IMR-90 (cell line): ENCODE measurements at regions of chr7 and their contacts with region 1.

Region 1: GRCh38 chr7:82234457-82235049 is 209.0 kb downstream of the CACNA2D1 start:
- DNase-seq: peak; percentile 59
- ATAC-seq: no peak; the same call in 1 of the 2 replicates
- H3K4me3 ChIP-seq: no peak overlapping the region
- H3K27ac ChIP-seq: no peak overlapping the region
- H3K4me1 ChIP-seq: 0 out of 2 replicates have a peak, but pooled peaks cover 1% of the 10 kb centered on the region
- H3K27me3 ChIP-seq: no peaks in the 10 kb centered on the region
- CTCF ChIP-seq: peak; percentile 75
- POLR2A ChIP-seq: no peak
- RAD21 ChIP-seq: peak; percentile 75

Region 2: DNA sequence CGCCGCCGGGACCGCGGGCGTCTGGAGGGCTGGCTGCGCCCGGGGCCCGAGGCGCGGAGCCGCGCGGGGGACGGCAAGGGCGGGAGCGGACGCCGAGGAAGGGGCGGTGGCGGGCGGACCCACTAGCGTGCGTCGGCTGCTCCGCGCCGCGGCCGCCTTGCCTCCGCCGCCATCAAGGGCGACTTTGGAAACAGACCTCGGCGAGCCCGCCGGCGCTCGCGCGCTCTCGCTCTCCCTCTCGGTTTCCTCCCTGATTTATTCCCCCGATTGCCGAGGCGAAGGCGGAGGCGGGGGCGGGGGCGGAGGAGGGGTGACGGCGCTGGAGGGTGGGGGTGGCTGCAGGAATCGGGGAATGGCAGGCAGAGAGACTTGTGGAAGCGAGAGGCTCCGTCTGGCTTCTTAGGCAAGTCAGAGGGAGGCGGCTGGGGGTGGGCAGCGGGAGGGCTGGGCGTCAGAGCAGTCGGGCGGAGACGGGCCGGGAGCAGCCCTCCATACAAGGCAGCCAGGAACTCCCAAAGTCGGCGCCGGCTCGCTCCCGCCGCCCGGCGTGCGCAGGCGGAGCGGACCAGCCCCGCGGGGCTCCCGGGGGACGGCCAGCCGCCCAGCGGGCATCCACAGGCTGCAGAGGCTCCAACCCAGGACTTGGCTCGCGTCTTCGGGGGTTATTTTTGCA is 209.1 kb after region 1 on chr7 and contains the start of gene CACNA2D1:
- CTCF ChIA-PET with region 1: no interaction called
- POLR2A ChIA-PET with region 1: no interaction called
- dilution Hi-C with region 1: no loop called
- in situ Hi-C with region 1: no loop called
- intact Hi-C with region 1: loop called (anchors 5 kb)
- DNase-seq: peak; percentile 91
- ATAC-seq: peak; percentile 91
- H3K4me3 ChIP-seq: peak within 1 kb of the TSS; percentile 96
- H3K27ac ChIP-seq: peak within 1 kb of the TSS; percentile 98
- H3K4me1 ChIP-seq: peaks cover 2% of the 10 kb centered on the region
- H3K27me3 ChIP-seq: no peaks in the 10 kb centered on the region
- CTCF ChIP-seq: peak; percentile 37
- POLR2A ChIP-seq: peak; percentile 53; the same call in 1 of the 2 replicates
- RAD21 ChIP-seq: peak; percentile 39; the same call in 1 of the 2 replicates
- total RNA-seq, gene CACNA2D1: 21.9 and 32.2 TPM in 2 replicates

Region 3: DNA sequence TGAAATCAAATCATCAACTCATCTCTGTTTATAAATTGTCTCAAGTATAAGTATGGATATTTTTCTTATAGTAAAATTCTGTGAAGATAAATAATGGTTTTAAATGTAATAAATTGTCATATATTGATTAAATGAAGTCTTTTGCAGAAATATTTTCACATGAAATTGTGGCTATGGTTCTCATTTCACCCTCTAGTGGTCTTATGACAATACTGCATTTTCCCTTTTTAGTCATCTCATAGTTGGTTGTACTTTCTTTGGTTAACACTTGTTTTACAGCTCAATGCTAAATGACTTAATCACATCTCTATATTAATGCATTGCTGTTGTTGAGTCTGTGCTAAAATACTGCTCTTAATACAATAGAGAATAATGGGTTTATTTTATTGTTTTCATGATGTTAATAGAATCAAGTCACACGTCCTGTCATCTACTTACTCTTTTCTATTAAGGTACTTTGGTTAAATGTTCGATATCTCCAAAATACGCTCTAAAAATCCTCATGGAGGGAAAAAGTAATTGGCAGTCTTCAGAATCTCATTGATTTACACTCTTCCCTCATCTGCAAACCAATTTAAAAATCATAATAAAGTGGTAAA is 247.0 kb after region 1 on chr7:
- CTCF ChIA-PET with region 1: no interaction called
- POLR2A ChIA-PET with region 1: no interaction called
- dilution Hi-C with region 1: no loop called
- in situ Hi-C with region 1: loop called (anchors 10 kb)
- intact Hi-C with region 1: loop called (anchors 1 kb)
- DNase-seq: peak; percentile 43
- ATAC-seq: 0 out of 2 replicates have a peak, but pooled peaks have one; percentile 40
- H3K4me3 ChIP-seq: no peak overlapping the region
- H3K27ac ChIP-seq: no peak overlapping the region
- H3K4me1 ChIP-seq: no peaks in the 10 kb centered on the region
- H3K27me3 ChIP-seq: no peaks in the 10 kb centered on the region
- CTCF ChIP-seq: peak; percentile 79
- POLR2A ChIP-seq: no peak
- RAD21 ChIP-seq: peak; percentile 74

Region 4: DNA sequence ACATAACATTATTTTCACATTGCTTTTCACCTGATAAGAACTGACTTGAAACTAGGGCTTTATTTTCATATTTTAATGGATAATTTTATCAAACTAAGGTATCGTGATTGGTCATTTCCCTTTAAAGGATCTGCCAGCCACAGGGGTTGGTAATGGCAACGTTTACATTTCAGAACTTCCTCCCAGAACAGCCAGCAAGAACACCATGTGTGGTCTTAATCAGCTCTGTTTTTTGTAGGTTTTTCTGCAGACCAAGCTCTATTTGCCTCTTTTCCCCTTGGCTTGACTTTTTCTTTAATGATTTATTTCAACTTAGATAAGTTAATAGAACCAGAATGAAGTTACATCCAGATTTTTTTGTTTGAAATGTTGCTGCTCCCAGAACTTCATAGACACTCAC is 471.3 kb after region 1 on chr7:
- CTCF ChIA-PET with region 1: no interaction called
- POLR2A ChIA-PET with region 1: no interaction called
- dilution Hi-C with region 1: no loop called
- in situ Hi-C with region 1: no loop called
- intact Hi-C with region 1: loop called (anchors 5 kb)
- DNase-seq: peak; percentile 25
- ATAC-seq: peak; percentile 57; the same call in 1 of the 2 replicates
- H3K4me3 ChIP-seq: no peak overlapping the region
- H3K27ac ChIP-seq: no peak overlapping the region
- H3K4me1 ChIP-seq: no peaks in the 10 kb centered on the region; the same call in 1 of the 2 replicates
- H3K27me3 ChIP-seq: peaks cover 1% of the 10 kb centered on the region; the same call in 1 of the 2 replicates
- CTCF ChIP-seq: no peak
- POLR2A ChIP-seq: no peak
- RAD21 ChIP-seq: no peak